ENCODE measurements at regions of chr7 and their contacts with region 1.

Region 1: GRCh38 chr7:26329520-26330255 is 38.0 kb downstream of the SNX10 start:
- DNase-seq: peak; percentile 77 to 95 (median 88)
- H3K4me3 ChIP-seq: peak overlapping the region in 1 of 3 experiments; percentile 40
- H3K4me3 Mint-ChIP-seq: peak overlapping the region; percentile 63 to 80
- H3K27ac ChIP-seq: peak overlapping the region; percentile 79 to 88
- H3K27ac Mint-ChIP-seq: peak overlapping the region; percentile 91 to 98 (median 97)
- H3K4me1 ChIP-seq: peaks cover 62 to 71% of the 10 kb centered on the region in 2 donors
- H3K4me1 Mint-ChIP-seq: peaks cover 72% of the 10 kb centered on the region
- H3K27me3 ChIP-seq: no peaks in the 10 kb centered on the region
- H3K27me3 Mint-ChIP-seq: no peaks in the 10 kb centered on the region
- CTCF ChIP-seq: no peak

Region 2: DNA sequence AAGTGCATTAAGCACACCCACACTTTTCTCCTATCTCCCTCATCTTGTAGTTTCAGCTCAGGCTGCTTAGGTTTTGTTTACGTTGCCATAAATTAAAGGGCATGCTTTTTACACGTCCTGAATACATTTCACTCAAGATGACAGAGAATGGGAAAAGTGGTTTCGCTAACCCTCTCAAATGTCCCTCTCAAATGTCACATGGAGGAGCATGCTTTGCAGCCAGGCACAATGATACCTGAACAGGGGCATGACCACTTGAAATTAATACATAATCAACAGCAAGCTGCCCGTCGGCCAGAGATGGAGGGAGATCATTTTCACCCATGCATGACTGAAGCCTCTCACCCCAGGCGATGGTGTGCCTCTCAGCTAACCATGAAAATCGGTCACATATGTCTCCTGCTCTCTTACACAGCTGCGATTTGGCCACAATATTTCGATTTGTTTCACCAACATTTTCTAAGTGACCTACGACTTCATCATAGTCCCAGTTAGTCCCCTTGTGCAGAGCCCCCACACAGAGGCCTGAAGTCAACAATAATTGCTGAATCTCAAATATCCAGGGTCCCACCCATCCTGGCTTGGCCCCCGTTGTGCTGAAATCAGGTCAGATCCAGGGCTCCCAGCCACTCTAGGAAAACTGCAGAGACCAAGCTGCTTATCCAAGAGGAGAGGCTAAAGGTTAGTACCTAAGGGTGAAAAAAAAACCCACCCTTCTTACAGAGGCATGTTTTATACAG is 551.5 kb before region 1 on chr7:
- intact Hi-C with region 1: no loop called
- DNase-seq: no peak
- H3K4me3 ChIP-seq: no peak overlapping the region
- H3K4me3 Mint-ChIP-seq: no peak overlapping the region
- H3K27ac ChIP-seq: no peak overlapping the region
- H3K27ac Mint-ChIP-seq: no peak overlapping the region
- H3K4me1 ChIP-seq: no peaks in the 10 kb centered on the region
- H3K4me1 Mint-ChIP-seq: peaks cover 2% of the 10 kb centered on the region
- H3K27me3 ChIP-seq: no peaks in the 10 kb centered on the region
- H3K27me3 Mint-ChIP-seq: peaks cover 0 to 6% (median 3%) of the 10 kb centered on the region in 3 donors
- CTCF ChIP-seq: no peak

Region 3: GRCh38 chr7:26265065-26265464 is 64.6 kb before region 1 on chr7:
- intact Hi-C with region 1: no loop called
- DNase-seq: no peak
- H3K4me3 ChIP-seq: no peak overlapping the region
- H3K4me3 Mint-ChIP-seq: no peak overlapping the region
- H3K27ac ChIP-seq: no peak overlapping the region
- H3K27ac Mint-ChIP-seq: no peak overlapping the region
- H3K4me1 ChIP-seq: no peaks in the 10 kb centered on the region
- H3K4me1 Mint-ChIP-seq: no peaks in the 10 kb centered on the region
- H3K27me3 ChIP-seq: no peaks in the 10 kb centered on the region
- H3K27me3 Mint-ChIP-seq: no peaks in the 10 kb centered on the region
- CTCF ChIP-seq: no peak

Region 4: DNA sequence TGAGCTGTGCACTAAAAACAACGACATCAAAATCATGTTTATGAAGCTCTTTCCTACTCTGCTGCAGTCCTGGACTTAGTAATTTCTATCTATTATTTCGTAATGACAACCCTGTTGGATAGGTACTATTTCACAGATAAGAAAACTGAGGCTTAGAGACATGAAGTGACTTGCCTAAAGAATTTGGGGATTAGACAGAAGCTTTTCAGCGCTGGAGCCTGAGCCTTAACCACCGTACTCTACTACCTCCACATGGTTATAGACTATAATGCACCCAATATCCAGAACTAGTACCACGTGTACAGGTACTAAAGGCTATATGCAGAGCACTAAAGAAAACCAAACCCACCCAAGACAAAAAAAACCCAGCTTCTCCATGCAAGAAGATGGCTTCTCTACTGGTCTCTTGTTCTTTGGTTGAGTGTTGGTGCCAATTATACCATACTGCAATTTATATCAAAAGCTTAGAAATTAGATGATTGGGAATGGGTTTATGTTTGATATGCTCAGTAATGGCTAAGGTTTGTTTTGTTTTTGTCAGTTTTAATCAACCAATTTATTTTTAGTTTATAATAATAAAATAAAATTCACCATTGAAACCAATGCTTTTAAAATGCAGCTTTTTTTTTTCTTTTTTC is 44.6 kb before region 1 on chr7:
- intact Hi-C with region 1: loop called in 1 of 2 experiments (anchors 10 kb)
- DNase-seq: no peak
- H3K4me3 ChIP-seq: no peak overlapping the region
- H3K4me3 Mint-ChIP-seq: no peak overlapping the region
- H3K27ac ChIP-seq: no peak overlapping the region
- H3K27ac Mint-ChIP-seq: no peak overlapping the region
- H3K4me1 ChIP-seq: peaks cover 23 to 29% of the 10 kb centered on the region in 2 donors
- H3K4me1 Mint-ChIP-seq: peaks cover 28% of the 10 kb centered on the region
- H3K27me3 ChIP-seq: no peaks in the 10 kb centered on the region
- H3K27me3 Mint-ChIP-seq: peaks cover 0 to 2% (median 0%) of the 10 kb centered on the region in 3 donors
- CTCF ChIP-seq: peak; percentile 21

Measured in CD14-positive monocyte (primary cell).